ENCODE measurements at regions of chr2 and their contacts with region 1.

Region 1: GRCh38 chr2:201231781-201232466 is 28.4 kb upstream of the CASP8 start:
- DNase-seq: peak; percentile 94
- H3K4me3 Mint-ChIP-seq: peak overlapping the region; percentile 49
- H3K27ac Mint-ChIP-seq: peak overlapping the region; percentile 98
- H3K4me1 Mint-ChIP-seq: peaks cover 42% of the 10 kb centered on the region
- H3K27me3 Mint-ChIP-seq: no peaks in the 10 kb centered on the region

Region 2: GRCh38 chr2:200713003-200713703 is 518.8 kb before region 1 on chr2:
- CTCF ChIA-PET with region 1: interaction called, 3 read pairs
- POLR2A ChIA-PET with region 1: no interaction called
- intact Hi-C with region 1: loop called (anchors 1 kb)
- DNase-seq: peak; percentile 96
- H3K4me3 Mint-ChIP-seq: peak overlapping the region; percentile 66
- H3K27ac Mint-ChIP-seq: peak overlapping the region; percentile 100
- H3K4me1 Mint-ChIP-seq: peaks cover 33% of the 10 kb centered on the region
- H3K27me3 Mint-ChIP-seq: peaks cover 5% of the 10 kb centered on the region

Region 3: DNA sequence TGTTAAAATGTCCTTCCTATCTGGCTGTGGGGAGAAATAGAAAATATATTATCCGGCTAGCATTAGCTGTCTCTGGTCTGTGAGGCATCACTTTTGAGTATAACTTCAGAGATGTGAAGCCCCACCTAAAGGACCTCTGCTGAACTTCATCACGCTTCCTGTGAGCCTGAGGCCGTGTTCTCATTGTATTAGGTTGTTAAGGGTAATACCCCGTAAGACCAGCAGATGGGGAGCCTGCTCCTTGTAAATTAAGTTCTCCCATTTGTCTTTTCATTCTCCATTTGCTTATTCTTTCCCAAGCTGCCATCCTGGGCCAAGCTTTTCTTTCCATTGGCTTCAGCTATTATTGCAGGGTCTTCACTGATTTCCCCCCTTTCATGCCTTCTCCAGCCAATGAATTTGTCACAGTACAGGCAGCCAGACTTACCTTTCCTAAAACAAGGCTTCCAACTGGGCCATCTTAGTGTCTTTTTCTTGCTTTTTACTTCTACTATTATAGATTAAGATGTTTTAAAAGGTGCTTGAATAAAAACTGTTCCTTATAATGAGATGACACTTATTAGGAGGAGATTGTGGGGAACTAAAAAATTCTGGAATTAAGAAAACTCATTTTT is 330.4 kb before region 1 on chr2:
- CTCF ChIA-PET with region 1: interaction called, 27 read pairs
- POLR2A ChIA-PET with region 1: no interaction called
- intact Hi-C with region 1: loop called (anchors 1 kb)
- DNase-seq: peak; percentile 79
- H3K4me3 Mint-ChIP-seq: no peak overlapping the region
- H3K27ac Mint-ChIP-seq: peak overlapping the region; percentile 69
- H3K4me1 Mint-ChIP-seq: peaks cover 9% of the 10 kb centered on the region
- H3K27me3 Mint-ChIP-seq: no peaks in the 10 kb centered on the region

Region 4: GRCh38 chr2:200975672-200976071 is 256.3 kb before region 1 on chr2:
- CTCF ChIA-PET with region 1: no interaction called
- POLR2A ChIA-PET with region 1: no interaction called
- intact Hi-C with region 1: no loop called
- DNase-seq: no peak
- H3K4me3 Mint-ChIP-seq: no peak overlapping the region
- H3K27ac Mint-ChIP-seq: no peak overlapping the region
- H3K4me1 Mint-ChIP-seq: peaks cover 6% of the 10 kb centered on the region
- H3K27me3 Mint-ChIP-seq: no peaks in the 10 kb centered on the region

Region 5: GRCh38 chr2:201130524-201131186 is 101.3 kb before region 1 on chr2:
- CTCF ChIA-PET with region 1: interaction called, 14 read pairs
- POLR2A ChIA-PET with region 1: interaction called, 11 read pairs
- intact Hi-C with region 1: loop called (anchors 1 kb)
- DNase-seq: peak; percentile 55
- H3K4me3 Mint-ChIP-seq: peak overlapping the region; percentile 92
- H3K27ac Mint-ChIP-seq: peak overlapping the region; percentile 94
- H3K4me1 Mint-ChIP-seq: peaks cover 54% of the 10 kb centered on the region
- H3K27me3 Mint-ChIP-seq: no peaks in the 10 kb centered on the region

Region 6: DNA sequence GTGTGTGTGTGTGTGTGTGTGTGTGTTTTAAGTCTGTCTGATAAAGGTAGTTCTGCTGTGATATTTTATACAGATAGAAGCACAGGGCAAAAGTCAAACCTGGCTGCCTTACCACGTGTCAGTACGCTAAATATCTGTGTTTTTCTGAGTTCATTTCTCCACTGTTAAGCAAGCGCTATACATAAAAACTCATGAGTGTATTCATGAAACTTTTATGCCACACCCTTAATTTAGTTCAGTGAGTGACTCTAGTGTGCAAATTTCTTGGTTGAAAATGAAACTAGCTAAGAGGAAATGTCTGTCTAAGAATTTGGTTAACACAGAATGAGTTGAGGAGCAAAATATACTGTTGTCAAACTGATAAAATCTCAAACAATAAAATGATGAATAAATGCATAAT is 37.8 kb before region 1 on chr2:
- CTCF ChIA-PET with region 1: interaction called, 43 read pairs
- POLR2A ChIA-PET with region 1: interaction called, 5 read pairs
- intact Hi-C with region 1: loop called (anchors 1 kb)
- DNase-seq: no peak
- H3K4me3 Mint-ChIP-seq: no peak overlapping the region
- H3K27ac Mint-ChIP-seq: peak overlapping the region; percentile 33
- H3K4me1 Mint-ChIP-seq: peaks cover 53% of the 10 kb centered on the region
- H3K27me3 Mint-ChIP-seq: no peaks in the 10 kb centered on the region

Region 7: GRCh38 chr2:201257956-201258665 is 26.2 kb after region 1 on chr2:
- CTCF ChIA-PET with region 1: interaction called, 120 read pairs
- POLR2A ChIA-PET with region 1: interaction called, 96 read pairs
- intact Hi-C with region 1: loop called (anchors 1 kb)
- DNase-seq: peak; percentile 96
- H3K4me3 Mint-ChIP-seq: peak overlapping the region; percentile 85
- H3K27ac Mint-ChIP-seq: peak overlapping the region; percentile 98
- H3K4me1 Mint-ChIP-seq: peaks cover 66% of the 10 kb centered on the region
- H3K27me3 Mint-ChIP-seq: no peaks in the 10 kb centered on the region

Region 8: DNA sequence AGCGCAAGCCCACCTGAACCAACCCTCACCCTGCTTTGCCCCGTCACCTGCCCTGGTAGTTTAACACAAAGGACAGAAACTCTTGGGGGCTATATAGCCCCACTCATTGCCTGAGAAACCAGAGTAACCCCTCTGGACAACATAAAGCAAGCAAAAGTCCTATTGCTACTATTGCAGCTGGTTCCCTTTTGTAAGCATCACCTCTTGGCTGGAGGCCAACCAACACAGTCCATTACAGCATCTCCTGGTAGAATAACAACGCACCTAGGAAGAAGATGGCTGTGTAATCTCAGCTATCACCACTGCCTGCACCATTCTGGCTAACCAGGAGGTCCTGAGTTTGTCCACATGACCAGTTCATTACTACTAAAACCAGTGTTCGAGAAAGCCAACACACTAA is 88.8 kb after region 1 on chr2:
- CTCF ChIA-PET with region 1: no interaction called
- POLR2A ChIA-PET with region 1: no interaction called
- intact Hi-C with region 1: no loop called
- DNase-seq: no peak
- H3K4me3 Mint-ChIP-seq: no peak overlapping the region
- H3K27ac Mint-ChIP-seq: no peak overlapping the region
- H3K4me1 Mint-ChIP-seq: no peaks in the 10 kb centered on the region
- H3K27me3 Mint-ChIP-seq: no peaks in the 10 kb centered on the region

Region 9: DNA sequence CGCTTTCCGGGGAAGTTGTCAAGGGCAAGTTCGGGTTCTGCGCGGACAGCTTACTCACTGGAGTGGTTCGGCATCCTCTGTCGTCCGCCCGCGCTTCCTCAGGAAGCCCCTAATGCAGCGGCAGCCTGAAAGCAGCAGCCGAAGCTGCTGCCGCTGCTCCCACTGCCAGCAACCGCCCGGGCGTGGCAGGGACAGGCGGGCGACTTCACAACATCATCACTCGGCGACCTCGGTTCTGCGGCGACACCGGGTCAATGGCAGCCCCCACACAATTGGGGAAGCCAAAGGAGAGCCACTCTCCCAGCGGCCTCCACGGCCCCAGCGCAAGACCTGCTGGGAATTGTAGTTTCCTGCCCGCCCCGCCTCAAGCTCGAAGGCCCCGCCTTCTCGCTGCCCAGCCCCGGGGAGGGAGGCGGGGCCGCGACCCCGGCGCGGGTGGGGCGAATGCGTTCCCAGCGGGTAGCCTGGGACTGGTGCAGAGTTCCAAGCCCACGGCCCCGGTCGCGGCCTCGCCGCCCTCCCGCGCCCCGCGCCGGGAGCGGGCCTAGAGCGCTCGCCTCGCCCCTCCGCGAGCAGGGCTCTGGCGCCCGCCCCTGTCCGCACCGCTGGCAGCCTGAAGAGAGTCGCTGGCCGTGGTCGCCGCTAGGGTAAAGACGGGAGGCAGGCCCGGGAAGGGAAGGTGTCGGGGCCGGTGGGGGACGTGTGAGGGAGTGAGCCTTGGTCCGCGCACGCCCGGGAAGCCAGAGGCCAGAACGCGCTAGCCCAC is 219.6 kb after region 1 on chr2 and contains the starts of genes STRADB and TRAK2:
- CTCF ChIA-PET with region 1: interaction called, 5 read pairs
- POLR2A ChIA-PET with region 1: interaction called, 11 read pairs
- intact Hi-C with region 1: loop called (anchors 1 kb)
- DNase-seq: peak; percentile 98
- H3K4me3 Mint-ChIP-seq: peak within 1 kb of the TSS; percentile 96
- H3K27ac Mint-ChIP-seq: peak within 1 kb of the TSS; percentile 97
- H3K4me1 Mint-ChIP-seq: peaks cover 44% of the 10 kb centered on the region
- H3K27me3 Mint-ChIP-seq: no peaks in the 10 kb centered on the region
- total RNA-seq, gene STRADB: 18.5 to 19.8 TPM
- total RNA-seq, gene TRAK2: 23.5 to 26.0 TPM